ENCODE measurements at regions of chr11 and their contacts with region 1.

Region 1: GRCh38 chr11:59894616-59895015 is 16.0 kb downstream of the OOSP3 start:
- DNase-seq: no peak
- H3K4me3 ChIP-seq: no peak overlapping the region
- H3K27ac ChIP-seq: no peak overlapping the region
- H3K4me1 ChIP-seq: no peaks in the 10 kb centered on the region
- H3K27me3 ChIP-seq: no peaks in the 10 kb centered on the region
- CTCF ChIP-seq: no peak

Region 2: DNA sequence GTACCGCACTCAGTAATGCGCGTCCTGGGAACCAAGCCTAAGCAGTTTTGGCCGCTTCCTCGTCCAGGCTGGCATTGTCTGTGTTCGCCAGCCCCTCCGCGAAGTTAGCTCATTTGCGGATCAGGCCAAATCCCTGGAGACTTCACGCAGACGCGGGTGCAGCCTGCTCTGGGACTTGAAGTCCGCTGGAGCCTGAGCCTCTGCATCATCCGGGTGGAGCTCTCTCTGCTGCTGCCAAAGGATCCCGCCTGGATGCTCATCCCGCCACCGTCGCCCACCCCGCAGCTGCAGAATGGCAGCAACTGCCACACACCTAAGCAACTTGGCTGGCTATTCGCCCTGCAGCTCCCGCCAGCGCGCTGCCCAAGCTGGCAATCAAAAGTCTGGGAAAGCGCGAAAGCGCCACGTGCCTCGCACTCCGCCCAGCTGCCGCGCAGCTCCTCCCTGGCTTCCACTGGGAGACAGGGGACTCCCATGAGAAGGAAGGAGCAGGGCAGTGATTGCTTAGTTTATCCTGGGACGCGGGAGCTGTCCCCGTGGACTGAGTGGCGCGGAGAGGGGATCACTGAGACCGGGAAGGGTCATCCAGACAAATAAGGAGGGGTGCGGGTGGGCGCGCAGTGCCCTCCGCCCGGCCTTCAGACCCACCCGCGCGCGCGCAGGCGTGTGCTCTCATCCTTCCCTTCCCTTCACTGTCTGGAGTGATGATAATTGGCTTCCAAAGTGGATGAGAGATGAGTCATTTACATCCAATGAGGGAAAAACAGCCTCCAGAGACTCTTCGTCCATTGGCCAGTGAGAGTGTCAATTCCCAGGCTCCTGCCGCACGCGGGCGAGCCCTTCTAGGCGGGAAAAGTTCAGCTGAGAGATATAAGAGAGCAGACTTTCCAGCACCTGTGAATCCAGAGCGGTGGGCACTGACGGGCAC is 831.8 kb before region 1 on chr11:
- CTCF ChIA-PET with region 1: no interaction called
- POLR2A ChIA-PET with region 1: interaction called, 11 read pairs
- intact Hi-C with region 1: no loop called
- DNase-seq: no peak
- H3K4me3 ChIP-seq: no peak overlapping the region
- H3K27ac ChIP-seq: no peak overlapping the region
- H3K4me1 ChIP-seq: no peaks in the 10 kb centered on the region
- H3K27me3 ChIP-seq: peaks cover 73% of the 10 kb centered on the region
- CTCF ChIP-seq: no peak

Region 3: GRCh38 chr11:59849129-59849528 is 45.5 kb before region 1 on chr11:
- CTCF ChIA-PET with region 1: no interaction called
- POLR2A ChIA-PET with region 1: no interaction called
- intact Hi-C with region 1: no loop called
- DNase-seq: no peak
- H3K4me3 ChIP-seq: no peak overlapping the region
- H3K27ac ChIP-seq: no peak overlapping the region
- H3K4me1 ChIP-seq: no peaks in the 10 kb centered on the region
- H3K27me3 ChIP-seq: no peaks in the 10 kb centered on the region
- CTCF ChIP-seq: no peak

Measured in PC-9 (cell line).